Spleen (tissue), 13 donors: ENCODE measurements at regions of chr2 and their contacts with region 1.

Region 1: GRCh38 chr2:143110758-143111428 is 18.3 kb upstream of the ARHGAP15 start:
- DNase-seq: peak; percentile 72
- H3K4me3 ChIP-seq: no peak overlapping the region
- H3K27ac ChIP-seq: peak overlapping the region in 4 of 8 donors; percentile 22 to 72 (median 54)
- H3K4me1 ChIP-seq: peaks cover 0 to 14% (median 9%) of the 10 kb centered on the region in 6 donors
- H3K27me3 ChIP-seq: no peaks in the 10 kb centered on the region
- CTCF ChIP-seq: peak; percentile 33 to 83 (median 77)
- POLR2A ChIP-seq: no peak

Region 2: DNA sequence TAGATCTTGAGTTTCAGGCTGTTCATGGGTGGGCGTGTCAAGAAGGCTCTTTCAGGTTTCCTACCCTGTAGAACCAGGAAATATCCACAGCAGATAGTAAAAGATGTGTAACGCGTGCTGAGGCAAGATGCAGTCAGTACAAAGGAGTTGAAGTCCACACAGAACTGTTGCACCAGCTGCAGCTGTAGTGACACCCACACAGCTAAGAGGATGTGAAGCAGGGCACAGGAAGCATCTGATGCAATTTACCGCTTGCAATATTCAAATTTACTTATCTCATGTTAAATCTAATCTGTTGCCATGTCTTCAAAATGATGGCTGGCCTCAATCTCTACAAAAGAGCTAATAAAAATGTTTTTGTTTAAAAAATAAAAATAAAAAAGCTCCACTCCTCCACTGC is 151.1 kb after region 1 on chr2:
- intact Hi-C with region 1: loop called (anchors 5 kb)
- DNase-seq: peak; percentile 83
- H3K4me3 ChIP-seq: peak overlapping the region in 1 of 8 donors; percentile 25
- H3K27ac ChIP-seq: peak overlapping the region; percentile 27 to 87 (median 78)
- H3K4me1 ChIP-seq: peaks cover 23 to 67% (median 48%) of the 10 kb centered on the region in 6 donors
- H3K27me3 ChIP-seq: no peaks in the 10 kb centered on the region
- CTCF ChIP-seq: no peak
- POLR2A ChIP-seq: no peak